Posterior vena cava (tissue), 2 donors: ENCODE measurements at regions of chr1 and their contacts with region 1.

Region 1: GRCh38 chr1:203931947-203932346 is 70.5 kb downstream of the SNRPE start:
- DNase-seq: no peak

Region 2: DNA sequence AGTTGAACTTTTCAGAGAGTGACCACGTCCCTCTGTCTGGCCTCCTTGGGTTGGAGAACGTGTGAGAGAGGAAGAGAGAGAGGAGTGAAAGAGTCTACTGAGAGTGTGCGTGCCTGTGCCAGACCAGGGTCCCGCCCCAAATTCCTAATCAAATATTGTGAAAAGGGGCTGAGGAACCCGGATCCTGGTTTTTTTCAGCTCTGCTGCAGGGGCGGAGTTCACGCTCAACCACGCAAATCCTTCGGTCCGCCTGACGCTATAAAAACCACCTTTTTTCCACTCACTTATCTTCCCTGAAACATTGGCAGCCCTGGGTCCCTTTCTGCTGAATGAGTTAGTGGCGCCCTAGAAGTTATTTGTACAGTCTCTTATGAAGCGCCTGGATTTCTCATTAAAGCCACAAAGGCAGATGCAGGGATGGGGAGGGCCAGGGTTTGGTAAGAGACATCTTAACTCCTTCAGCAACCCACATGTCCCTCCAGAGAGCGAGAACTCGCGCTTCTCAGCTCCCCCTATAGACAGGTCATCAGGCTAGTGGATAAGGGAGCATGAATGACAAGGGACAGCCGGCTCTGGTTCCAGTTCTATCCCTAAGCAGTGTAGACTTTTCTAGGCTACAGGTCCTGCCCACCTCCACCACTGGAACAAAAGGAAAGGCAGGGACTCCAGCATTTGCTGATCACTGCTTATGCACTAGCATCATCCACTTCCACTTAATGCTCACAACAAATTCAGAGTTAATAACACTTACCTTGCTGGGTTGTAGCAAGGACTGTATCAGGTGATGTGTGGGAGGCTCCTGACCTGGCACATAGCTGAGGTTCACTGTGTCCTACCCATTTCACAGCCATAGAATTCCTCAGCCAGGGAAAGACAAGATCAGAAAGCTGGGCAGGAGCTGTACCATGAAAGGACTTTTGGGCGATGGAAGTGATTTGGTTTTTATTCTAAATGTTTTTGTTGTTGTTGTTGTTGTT is 580.6 kb before region 1 on chr1 and contains the start of gene FMOD:
- intact Hi-C with region 1: no loop called
- DNase-seq: peak; percentile 91
- total RNA-seq, gene FMOD: 102 to 216 TPM

Region 3: DNA sequence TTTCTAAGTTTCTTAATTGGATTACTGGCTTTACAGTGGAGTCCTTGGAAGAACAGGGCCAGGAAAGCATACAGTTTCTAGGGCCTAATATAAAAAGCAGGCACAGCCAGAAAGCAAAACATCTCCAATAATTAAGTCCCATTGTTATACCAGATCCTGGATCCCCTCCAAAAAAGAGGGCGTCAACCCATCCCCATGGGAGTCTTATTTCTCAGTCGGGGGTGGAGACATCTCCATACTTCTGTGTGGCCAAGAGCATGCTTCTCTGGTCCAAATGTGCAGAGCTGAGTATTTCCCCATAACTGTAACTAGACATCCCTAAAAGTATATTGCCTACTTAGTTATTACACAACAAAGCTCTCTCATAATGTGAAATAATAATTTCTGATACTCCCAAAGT is 36.8 kb after region 1 on chr1:
- intact Hi-C with region 1: loop called in 1 of 2 experiments (anchors 1 kb)
- DNase-seq: no peak

Region 4: DNA sequence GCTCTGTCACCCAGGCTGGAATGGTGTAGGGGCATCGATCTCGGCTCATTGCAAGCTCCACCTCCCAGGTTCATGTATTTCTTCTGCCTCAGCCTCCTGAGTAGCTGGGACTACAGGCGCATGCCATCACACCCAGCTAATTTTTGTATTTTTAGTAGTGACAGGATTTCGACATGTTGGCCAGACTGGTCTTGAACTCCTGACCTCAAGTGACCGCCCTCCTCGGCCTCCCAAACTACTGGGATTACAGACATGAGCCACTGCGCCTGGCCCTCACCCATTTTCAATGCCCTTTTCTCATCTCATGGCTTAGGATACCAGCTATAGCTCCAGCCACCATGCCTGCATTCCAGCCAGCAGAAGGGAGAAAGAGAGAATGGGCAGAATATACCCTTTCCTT is 128.0 kb after region 1 on chr1:
- intact Hi-C with region 1: no loop called
- DNase-seq: no peak